Psoas muscle (tissue), 8 donors: ENCODE measurements at regions of chr5 and their contacts with region 1.

Region 1: DNA sequence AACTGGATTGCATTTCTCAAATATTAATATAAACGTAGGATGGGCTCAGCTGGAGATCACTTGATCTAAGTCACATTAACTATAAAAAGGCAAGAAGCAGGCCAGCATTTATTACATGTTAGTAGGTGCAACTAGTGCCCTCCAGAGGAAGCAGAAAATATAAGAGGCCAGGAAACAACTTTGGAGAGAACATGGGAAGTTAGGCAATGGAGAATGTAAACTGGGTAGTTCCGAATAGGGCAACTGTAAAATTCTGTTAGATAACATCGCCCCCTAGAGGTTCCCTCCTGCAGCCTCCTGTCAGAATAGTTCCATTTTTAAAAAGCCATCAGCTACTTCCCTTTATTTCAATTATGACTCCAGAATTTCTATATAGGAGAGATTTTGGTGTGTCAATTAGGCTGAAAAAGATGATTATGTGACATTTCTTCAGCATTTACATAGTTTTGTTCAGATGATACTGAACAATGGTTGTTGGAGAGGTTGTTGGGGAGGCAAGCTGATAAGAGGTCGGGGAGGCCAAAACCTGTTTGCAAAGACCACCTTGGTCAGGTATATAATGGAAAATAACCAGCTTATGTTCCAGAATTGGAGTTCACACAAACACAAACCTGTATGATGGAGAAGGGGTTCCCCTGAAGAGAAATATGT is 22.4 kb downstream of the CCL28 start:
- DNase-seq: no peak
- ATAC-seq: peak; percentile 59 to 91 (median 87)
- H3K4me3 ChIP-seq: no peak overlapping the region
- H3K27ac ChIP-seq: no peak overlapping the region
- H3K4me1 ChIP-seq: no peaks in the 10 kb centered on the region
- H3K27me3 ChIP-seq: no peaks in the 10 kb centered on the region
- CTCF ChIP-seq: peak; percentile 77

Region 2: DNA sequence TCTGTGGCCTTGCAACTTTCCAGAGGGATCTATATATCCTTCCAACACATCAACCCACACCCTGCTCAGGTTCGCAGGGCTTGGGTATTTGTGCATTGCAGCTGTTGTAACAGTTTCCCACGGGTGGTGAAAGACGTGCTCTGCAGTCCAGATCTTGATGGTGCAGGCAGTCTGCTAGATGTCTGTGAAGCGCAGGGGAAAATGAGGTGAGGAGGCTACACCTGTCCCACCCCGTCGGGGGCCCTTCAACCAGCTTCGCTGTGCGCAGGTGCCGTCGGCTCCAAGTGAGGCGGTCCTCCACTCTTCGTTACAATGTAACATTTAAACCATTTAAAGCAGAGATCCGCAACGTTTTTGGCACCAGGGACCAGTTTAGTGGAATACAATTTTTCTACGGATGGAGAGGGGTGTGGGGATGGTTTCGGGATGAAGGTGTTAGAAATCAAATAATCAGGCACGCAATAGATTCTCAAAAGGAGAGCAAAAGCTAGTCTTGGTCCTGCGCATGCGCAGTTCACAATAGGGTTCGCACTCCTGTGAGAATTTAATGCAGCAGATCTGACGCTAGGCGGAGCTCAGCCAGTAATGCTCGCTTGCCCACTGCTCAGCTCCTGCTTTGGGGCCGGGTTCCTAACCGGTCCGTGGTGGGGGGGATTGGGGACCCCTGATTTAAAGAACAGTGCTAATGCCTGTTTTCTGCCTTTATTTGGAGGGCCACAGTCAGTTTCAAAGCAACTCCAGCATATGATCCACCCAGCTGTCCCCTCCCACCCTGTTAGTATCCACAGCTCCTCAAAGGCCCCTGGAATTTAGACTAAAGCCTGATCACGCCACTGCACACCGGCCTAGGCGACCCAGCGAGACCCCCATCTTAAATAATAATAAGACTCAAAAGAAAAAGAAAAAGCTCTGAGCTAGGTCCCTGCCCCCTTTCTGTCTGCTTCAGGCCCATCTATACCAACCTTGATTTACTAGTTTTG is 481.0 kb before region 1 on chr5:
- intact Hi-C with region 1: loop called in 1 of 2 experiments (anchors 5 kb)
- DNase-seq: peak; percentile 87 to 92
- ATAC-seq: peak; percentile 91 to 99 (median 96)
- H3K4me3 ChIP-seq: peak overlapping the region; percentile 72
- H3K27ac ChIP-seq: no peak overlapping the region
- H3K4me1 ChIP-seq: no peaks in the 10 kb centered on the region
- H3K27me3 ChIP-seq: no peaks in the 10 kb centered on the region
- CTCF ChIP-seq: peak; percentile 78

Region 3: DNA sequence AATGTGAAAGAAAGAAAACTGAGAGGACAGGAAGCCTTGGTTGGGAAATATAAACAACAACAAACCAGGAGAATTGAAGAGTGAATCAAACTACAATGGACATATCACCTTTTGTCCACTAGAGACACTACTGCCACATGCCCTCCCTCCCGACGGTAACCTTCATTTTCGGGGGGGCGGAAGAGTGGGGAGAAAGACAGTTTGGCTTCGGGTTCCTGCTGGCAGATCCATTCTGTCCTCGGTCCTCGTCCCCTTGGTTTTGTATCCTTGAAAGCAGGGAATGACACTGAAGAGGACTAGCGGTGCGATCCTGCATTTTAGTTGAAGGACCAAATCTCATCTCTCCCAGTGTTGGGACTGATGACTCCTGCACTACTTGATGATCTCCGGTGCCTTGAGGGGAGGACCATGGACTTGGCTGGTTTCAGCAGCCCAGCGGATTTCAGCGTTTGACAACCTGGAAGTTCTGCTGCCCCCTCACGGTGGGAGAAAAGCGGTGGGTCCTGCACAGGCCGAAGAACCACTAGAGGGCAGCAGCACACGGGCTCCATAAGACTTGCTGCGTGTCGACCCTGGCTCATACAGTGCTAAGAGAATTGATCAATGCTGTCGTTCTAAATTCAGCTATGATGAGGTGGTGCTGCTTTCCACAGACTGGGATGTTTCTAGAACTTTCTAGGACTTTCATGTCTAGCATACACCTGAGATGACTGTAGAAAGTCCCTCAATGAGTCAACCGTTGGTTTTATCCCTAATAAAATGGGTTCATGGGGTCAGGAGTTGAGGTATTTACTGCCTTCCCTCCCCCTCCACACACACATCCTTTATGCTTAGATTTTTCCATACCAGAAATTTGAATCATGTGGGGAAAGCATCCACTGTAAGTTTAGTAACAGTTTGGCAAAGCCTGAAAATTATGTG is 284.2 kb before region 1 on chr5:
- intact Hi-C with region 1: loop called (anchors 2 to 10 kb)
- DNase-seq: peak; percentile 88 to 94
- ATAC-seq: peak; percentile 97 to 98 (median 98)
- H3K4me3 ChIP-seq: peak overlapping the region; percentile 69
- H3K27ac ChIP-seq: peak overlapping the region; percentile 74
- H3K4me1 ChIP-seq: no peaks in the 10 kb centered on the region
- H3K27me3 ChIP-seq: no peaks in the 10 kb centered on the region
- CTCF ChIP-seq: peak; percentile 98

Region 4: DNA sequence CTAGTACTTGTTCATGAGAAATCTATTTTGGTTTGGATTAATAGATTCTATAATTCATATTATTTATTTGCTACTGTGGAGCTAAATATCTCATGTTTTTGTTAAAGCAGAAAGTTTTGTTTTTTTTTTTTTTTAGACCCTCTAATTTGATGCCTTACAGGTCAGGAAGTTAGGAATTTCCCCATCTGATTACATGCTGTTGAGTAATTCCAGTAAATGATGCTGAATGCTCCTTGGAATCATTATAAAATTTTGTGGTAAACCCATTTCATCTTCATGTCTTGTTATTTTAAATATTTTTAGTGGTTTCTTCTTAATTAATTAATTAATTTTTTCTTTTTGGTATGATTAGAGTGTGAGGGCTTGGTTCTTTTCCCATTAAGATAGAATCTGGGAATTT is 248.7 kb after region 1 on chr5:
- intact Hi-C with region 1: no loop called
- DNase-seq: no peak
- ATAC-seq: no peak
- H3K4me3 ChIP-seq: no peak overlapping the region
- H3K27ac ChIP-seq: peak overlapping the region; percentile 17
- H3K4me1 ChIP-seq: peaks cover 77% of the 10 kb centered on the region
- H3K27me3 ChIP-seq: no peaks in the 10 kb centered on the region
- CTCF ChIP-seq: no peak